ENCODE measurements at regions of chr6 and their contacts with region 1.

Region 1: DNA sequence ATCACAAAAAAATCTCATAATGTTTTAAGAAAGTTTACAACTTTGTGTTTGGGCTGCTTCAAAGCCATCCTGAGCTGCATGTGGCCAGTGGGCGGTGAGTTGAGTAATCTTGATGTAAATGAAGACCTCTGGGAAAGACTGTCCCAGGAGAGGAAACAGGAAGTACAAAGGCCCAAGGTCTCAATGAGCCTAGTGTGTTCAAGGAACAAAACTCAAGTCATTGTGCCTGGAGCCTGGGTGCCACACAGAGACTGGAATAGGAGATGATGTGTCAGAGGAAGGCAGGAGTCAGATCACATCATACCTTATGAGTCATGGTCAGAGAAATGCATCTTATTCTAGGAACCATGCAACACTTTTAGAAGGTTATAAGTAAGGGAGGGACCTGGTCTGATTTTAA is 51.5 kb downstream of the COL19A1 start:
- H3K4me3 ChIP-seq: no peak overlapping the region
- H3K27ac ChIP-seq: no peak overlapping the region
- H3K4me1 ChIP-seq: peaks cover 3% of the 10 kb centered on the region; the same call in 1 of the 2 replicates
- CTCF ChIP-seq: no peak

Region 2: GRCh38 chr6:69894578-69895347 is 23.1 kb before region 1 on chr6:
- CTCF ChIA-PET with region 1: interaction called, 8 read pairs
- POLR2A ChIA-PET with region 1: interaction called, 15 read pairs
- H3K4me3 ChIP-seq: no peak overlapping the region
- H3K27ac ChIP-seq: peak overlapping the region; percentile 69
- H3K4me1 ChIP-seq: peaks cover 9% of the 10 kb centered on the region
- CTCF ChIP-seq: no peak

Region 3: GRCh38 chr6:69988458-69989126 is 70.8 kb after region 1 on chr6:
- CTCF ChIA-PET with region 1: no interaction called
- POLR2A ChIA-PET with region 1: no interaction called
- H3K4me3 ChIP-seq: no peak overlapping the region
- H3K27ac ChIP-seq: no peak overlapping the region
- H3K4me1 ChIP-seq: no peaks in the 10 kb centered on the region
- CTCF ChIP-seq: no peak

Region 4: GRCh38 chr6:70045413-70045812 is 127.6 kb after region 1 on chr6:
- CTCF ChIA-PET with region 1: no interaction called
- POLR2A ChIA-PET with region 1: no interaction called
- H3K4me3 ChIP-seq: no peak overlapping the region
- H3K27ac ChIP-seq: no peak overlapping the region
- H3K4me1 ChIP-seq: no peaks in the 10 kb centered on the region
- CTCF ChIP-seq: no peak

Measured in HEK293 (cell line).